ENCODE measurements at regions of chr19 and their contacts with region 1.

Region 1: DNA sequence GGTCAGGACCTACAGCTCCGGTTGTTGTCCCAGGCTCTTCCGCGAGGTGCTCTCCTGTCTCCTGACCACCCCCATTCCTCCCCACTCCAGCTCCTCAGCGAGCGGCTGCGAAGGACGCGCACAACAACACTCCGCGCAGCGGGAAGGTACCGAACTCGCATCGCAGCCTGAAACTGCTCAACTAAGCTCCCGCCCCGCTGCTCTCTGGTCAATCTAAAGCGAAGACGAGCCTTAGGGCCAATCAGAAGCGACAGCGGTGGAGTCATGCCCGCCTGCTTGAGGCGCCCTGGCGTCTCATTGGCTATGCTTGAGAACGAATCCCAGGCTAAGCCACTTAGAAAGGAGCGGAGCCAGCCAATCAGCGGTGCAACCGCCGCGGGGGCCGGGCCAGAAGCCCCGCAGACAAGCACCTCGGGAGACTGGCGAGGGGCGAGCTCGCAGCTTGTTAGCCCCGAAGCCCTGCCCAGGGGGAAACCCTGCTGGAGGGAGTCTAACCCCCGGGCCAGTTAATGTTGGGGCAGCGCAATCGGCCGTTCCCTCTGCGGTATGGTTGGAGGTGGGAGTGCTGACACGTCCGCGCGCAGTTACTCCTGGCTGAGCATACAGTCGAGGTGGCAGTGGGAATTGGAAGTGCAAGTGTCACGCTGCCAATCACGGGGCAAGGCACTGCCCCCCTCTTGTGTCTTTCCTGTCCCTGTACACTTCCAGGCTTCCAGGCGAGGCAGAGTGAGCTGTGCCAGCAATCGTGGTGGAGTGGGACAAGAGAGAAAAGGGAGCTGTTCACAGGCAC is 1.9 kb upstream of the ZBTB32 start:
- DNase-seq: peak; percentile 79 to 98 (median 92)
- ATAC-seq: peak; percentile 99
- H3K4me3 ChIP-seq: peak overlapping the region; percentile 71 to 79
- H3K4me3 Mint-ChIP-seq: peak overlapping the region; percentile 92
- H3K27ac ChIP-seq: peak overlapping the region in 1 of 2 experiments; percentile 41
- H3K27ac Mint-ChIP-seq: peak overlapping the region; percentile 92
- H3K4me1 ChIP-seq: peaks cover 4% of the 10 kb centered on the region
- H3K4me1 Mint-ChIP-seq: peaks cover 7% of the 10 kb centered on the region
- H3K27me3 ChIP-seq: no peaks in the 10 kb centered on the region
- H3K27me3 Mint-ChIP-seq: no peaks in the 10 kb centered on the region
- CTCF ChIP-seq: no peak

Region 2: GRCh38 chr19:35612559-35613321 is 89.7 kb before region 1 on chr19 and contains the start of gene HAUS5:
- CTCF ChIA-PET with region 1: no interaction called
- POLR2A ChIA-PET with region 1: interaction called, 3 read pairs
- intact Hi-C with region 1: loop called in 1 of 2 experiments (anchors 5 kb)
- DNase-seq: peak; percentile 90 to 99 (median 96)
- ATAC-seq: peak; percentile 91
- H3K4me3 ChIP-seq: peak within 1 kb of the TSS; percentile 87 to 91
- H3K4me3 Mint-ChIP-seq: peak within 1 kb of the TSS; percentile 86
- H3K27ac ChIP-seq: peak within 1 kb of the TSS; percentile 78 to 81
- H3K27ac Mint-ChIP-seq: peak within 1 kb of the TSS; percentile 94
- H3K4me1 ChIP-seq: peaks cover 26% of the 10 kb centered on the region
- H3K4me1 Mint-ChIP-seq: peaks cover 35% of the 10 kb centered on the region
- H3K27me3 ChIP-seq: no peaks in the 10 kb centered on the region
- H3K27me3 Mint-ChIP-seq: no peaks in the 10 kb centered on the region
- CTCF ChIP-seq: no peak
- total RNA-seq, gene HAUS5: 24.0 to 27.7 TPM

Region 3: DNA sequence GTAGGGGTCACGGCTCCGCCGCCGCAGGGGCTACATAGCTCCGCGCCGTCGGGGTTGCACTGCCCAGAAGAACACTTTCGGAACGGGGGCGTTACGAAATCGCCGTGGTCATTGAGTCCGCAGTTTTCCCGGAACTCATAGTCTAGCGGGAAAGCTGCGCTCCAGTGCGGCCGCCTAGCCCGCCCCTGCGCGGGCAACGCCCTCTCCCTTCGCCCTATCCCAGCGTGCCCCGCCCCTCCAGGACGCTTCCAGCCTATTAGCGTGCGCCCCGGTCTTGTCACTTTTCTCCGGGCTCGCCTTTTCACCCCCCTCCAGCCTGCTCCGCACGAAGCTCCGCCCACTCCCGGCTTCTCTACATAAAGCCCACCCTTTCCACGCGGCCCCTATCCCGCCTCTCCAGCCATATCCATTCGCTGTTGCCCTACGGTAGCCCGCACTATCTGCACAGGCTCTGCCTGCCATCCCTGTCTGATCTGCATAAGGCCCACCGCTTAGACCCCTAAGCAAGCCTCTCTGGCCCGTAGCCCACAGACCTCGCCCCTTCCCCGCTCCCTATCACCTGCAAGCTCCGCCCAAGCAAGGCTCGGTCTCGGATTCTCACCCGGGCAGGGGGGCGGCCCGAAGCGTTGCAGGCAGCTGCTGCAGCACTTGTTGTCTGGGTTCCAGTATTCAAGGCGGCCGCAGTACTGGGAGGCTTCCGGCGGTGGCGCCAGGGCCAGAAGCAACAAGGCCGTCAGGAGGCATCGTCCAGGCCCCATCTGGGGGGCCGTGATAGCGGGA is 38.2 kb after region 1 on chr19:
- CTCF ChIA-PET with region 1: interaction called, 7 read pairs
- POLR2A ChIA-PET with region 1: interaction called, 14 read pairs
- intact Hi-C with region 1: loop called (anchors 1 kb)
- DNase-seq: peak; percentile 87 to 97 (median 95)
- ATAC-seq: peak; percentile 65
- H3K4me3 ChIP-seq: peak overlapping the region; percentile 60 to 63
- H3K4me3 Mint-ChIP-seq: peak overlapping the region; percentile 87
- H3K27ac ChIP-seq: peak overlapping the region; percentile 50 to 58
- H3K27ac Mint-ChIP-seq: peak overlapping the region; percentile 83
- H3K4me1 ChIP-seq: peaks cover 51% of the 10 kb centered on the region
- H3K4me1 Mint-ChIP-seq: peaks cover 53% of the 10 kb centered on the region
- H3K27me3 ChIP-seq: no peaks in the 10 kb centered on the region
- H3K27me3 Mint-ChIP-seq: no peaks in the 10 kb centered on the region
- CTCF ChIP-seq: no peak

Region 4: DNA sequence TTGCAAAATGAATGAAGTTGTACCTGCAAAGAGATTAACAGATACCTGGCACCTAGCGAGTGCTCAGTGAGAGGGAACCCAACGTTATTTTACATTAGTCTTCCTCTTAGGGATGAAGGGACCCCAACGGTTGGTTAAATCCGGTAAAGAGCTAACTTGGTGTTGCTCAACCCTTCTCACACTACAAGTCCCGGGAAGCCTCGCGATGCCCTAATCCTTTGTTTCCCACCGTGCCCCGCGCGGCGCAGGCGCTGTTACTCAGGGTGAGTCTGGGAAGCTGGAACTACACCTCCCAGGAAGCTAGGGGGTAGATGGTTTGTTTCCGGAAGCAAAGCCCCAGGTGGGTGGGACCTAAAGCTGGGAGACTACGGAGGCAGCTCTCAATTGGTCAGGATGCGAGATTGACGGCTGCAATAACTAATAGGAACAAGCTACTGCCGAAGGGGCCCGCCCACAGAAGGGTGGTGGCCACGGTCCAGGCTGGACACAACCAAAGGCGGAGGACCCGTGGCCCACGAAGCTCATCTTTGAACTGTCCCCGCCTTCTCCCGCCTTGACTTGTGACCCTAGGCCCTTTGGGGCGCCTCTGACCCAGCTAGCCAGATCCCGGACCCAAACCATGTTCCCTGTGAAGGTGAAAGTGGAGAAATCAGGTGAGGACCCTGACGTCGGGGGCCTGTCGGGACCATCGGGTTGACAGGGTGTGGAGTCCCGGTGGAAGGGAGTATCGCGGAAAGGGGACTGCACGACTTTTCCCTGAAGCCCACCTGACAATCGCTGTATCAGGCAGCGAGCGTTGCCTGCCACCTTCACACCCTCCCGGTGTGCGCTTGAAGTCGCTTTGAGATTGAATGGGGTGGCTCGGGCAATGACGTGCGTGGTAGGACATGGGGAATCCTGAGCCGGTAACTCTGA is 45.9 kb after region 1 on chr19 and contains the start of gene LIN37:
- CTCF ChIA-PET with region 1: interaction called, 4 read pairs
- POLR2A ChIA-PET with region 1: interaction called, 14 read pairs
- intact Hi-C with region 1: loop called (anchors 1 kb)
- DNase-seq: peak; percentile 97 to 100 (median 98)
- ATAC-seq: peak; percentile 72
- H3K4me3 ChIP-seq: peak within 1 kb of the TSS; percentile 84 to 99
- H3K4me3 Mint-ChIP-seq: peak within 1 kb of the TSS; percentile 98
- H3K27ac ChIP-seq: peak within 1 kb of the TSS; percentile 71 to 84
- H3K27ac Mint-ChIP-seq: peak within 1 kb of the TSS; percentile 95
- H3K4me1 ChIP-seq: peaks cover 41% of the 10 kb centered on the region
- H3K4me1 Mint-ChIP-seq: peaks cover 44% of the 10 kb centered on the region
- H3K27me3 ChIP-seq: no peaks in the 10 kb centered on the region
- H3K27me3 Mint-ChIP-seq: no peaks in the 10 kb centered on the region
- CTCF ChIP-seq: no peak
- total RNA-seq, gene LIN37: 5.5 to 9.3 TPM